ENCODE measurements at regions of chr5 and their contacts with region 1.

Region 1: DNA sequence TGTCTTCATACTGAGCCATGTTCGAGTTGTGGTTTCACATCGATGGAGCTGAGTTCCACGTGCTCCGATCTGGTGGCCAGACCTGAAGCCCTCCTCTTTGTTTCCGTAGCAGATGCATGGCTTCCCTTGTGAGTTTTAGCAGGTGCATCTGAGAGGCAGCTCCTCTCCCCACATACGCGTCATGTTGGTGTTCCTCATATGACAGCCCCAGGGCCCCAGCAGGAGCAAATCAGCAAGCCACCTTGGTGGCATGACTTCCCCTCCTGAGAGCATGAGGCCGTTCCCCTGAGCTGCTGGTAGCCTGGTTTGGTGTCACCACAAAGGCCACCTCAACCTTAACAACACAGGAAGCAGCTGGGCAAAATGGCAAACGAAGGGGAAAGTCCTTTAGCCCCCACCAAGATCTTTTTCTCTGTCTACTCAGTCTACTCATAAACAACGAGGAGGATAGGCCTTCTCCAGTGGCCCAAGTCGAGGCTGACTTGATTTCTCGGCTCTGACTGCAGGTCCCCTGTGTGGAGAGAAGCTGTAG is 5.9 kb downstream of the CYFIP2 start:
- DNase-seq: peak; percentile 94
- H3K4me3 Mint-ChIP-seq: peak overlapping the region; percentile 69
- H3K27ac Mint-ChIP-seq: peak overlapping the region; percentile 97
- H3K4me1 Mint-ChIP-seq: peaks cover 86% of the 10 kb centered on the region
- H3K27me3 Mint-ChIP-seq: no peaks in the 10 kb centered on the region

Region 2: GRCh38 chr5:157088342-157088990 is 183.3 kb before region 1 on chr5:
- CTCF ChIA-PET with region 1: no interaction called
- POLR2A ChIA-PET with region 1: no interaction called
- intact Hi-C with region 1: no loop called
- DNase-seq: no peak
- H3K4me3 Mint-ChIP-seq: no peak overlapping the region
- H3K27ac Mint-ChIP-seq: no peak overlapping the region
- H3K4me1 Mint-ChIP-seq: no peaks in the 10 kb centered on the region
- H3K27me3 Mint-ChIP-seq: no peaks in the 10 kb centered on the region

Region 3: DNA sequence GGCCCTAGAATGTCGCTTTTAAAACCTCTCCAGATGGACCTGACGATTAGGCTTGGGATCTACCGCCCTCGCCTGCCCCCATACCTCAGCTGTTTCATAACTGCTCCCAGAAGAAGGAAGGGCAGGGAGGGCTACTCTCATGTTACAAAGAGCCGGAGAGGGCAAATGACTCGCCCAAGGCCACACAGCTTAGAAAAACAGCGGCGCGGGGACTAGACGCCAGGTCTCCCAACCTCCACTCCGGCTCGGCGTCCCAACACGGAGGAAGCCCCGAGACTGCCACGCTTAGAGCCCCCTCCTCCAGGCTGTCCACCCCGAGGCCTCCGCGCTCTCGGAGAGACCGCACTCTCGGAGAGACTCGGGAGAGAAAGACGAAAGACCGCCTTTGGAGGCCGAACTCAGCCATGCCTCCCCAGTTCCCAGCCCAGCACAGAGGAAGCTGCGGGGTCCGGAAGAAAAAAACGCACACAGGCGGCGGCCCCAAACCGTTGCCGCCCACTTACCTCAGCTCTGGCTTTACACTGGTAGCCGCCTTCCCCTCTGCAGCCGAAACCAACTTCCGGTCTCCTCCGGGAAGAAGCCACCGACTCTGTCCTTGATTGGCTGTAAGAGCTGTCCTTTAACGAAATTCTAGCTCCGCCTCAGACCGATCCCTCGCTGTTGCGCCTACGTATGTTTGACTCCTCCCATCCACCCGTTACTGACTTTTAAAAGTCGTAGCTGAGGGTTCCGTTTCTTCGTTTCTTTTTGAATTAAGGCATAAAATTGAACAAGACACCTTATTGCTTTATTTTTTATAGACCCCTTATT is 129.3 kb before region 1 on chr5 and contains the start of gene MED7:
- CTCF ChIA-PET with region 1: interaction called, 10 read pairs
- POLR2A ChIA-PET with region 1: interaction called, 13 read pairs
- intact Hi-C with region 1: loop called (anchors 1 kb)
- DNase-seq: peak; percentile 96
- H3K4me3 Mint-ChIP-seq: peak within 1 kb of the TSS; percentile 96
- H3K27ac Mint-ChIP-seq: peak within 1 kb of the TSS; percentile 99
- H3K4me1 Mint-ChIP-seq: peaks cover 49% of the 10 kb centered on the region
- H3K27me3 Mint-ChIP-seq: no peaks in the 10 kb centered on the region
- total RNA-seq, gene MED7: 17.2 to 19.2 TPM

Region 4: DNA sequence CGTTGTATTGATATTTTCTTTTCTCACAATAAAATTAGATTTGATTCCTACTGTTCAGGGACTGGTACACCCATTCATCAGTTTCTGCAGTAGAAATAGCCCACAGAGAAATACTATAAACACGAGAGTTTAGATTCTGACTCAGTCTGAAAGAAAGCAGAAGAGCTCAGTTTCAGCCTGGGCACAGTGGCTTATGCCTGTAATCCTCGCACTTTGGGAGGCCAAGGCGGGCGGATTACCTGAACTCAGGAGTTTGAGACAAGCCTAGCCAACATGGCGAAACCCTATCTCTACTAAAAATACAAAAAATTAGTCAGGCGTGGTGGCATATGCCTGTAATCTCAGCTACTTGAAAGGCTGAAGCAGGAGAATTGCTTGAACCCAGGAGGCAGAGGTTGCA is 82.6 kb before region 1 on chr5:
- CTCF ChIA-PET with region 1: interaction called, 5 read pairs
- POLR2A ChIA-PET with region 1: interaction called, 12 read pairs
- intact Hi-C with region 1: no loop called
- DNase-seq: peak; percentile 76
- H3K4me3 Mint-ChIP-seq: peak overlapping the region; percentile 99
- H3K27ac Mint-ChIP-seq: peak overlapping the region; percentile 100
- H3K4me1 Mint-ChIP-seq: peaks cover 75% of the 10 kb centered on the region
- H3K27me3 Mint-ChIP-seq: no peaks in the 10 kb centered on the region

Region 5: DNA sequence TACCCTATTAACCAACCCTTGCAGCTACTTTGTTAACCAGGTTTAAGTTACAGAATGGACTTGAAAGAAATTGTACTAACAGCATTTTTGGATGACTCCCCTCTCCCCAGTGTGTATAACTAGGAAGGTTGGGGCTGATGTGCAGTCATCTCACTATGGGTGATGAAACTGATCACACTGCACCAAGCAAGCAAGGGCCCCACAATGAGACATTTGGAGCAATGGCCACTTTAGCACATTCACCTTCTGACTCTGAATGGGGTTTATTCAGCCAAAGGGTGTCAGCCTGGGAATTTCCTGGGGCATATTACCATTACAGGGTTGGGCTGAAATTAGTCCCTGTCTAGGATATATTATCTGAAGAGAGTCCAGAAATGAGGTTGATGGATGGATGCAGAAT is 24.5 kb before region 1 on chr5:
- CTCF ChIA-PET with region 1: interaction called, 25 read pairs
- POLR2A ChIA-PET with region 1: interaction called, 22 read pairs
- intact Hi-C with region 1: loop called (anchors 1 kb)
- DNase-seq: peak; percentile 79
- H3K4me3 Mint-ChIP-seq: peak overlapping the region; percentile 6
- H3K27ac Mint-ChIP-seq: peak overlapping the region; percentile 89
- H3K4me1 Mint-ChIP-seq: peaks cover 91% of the 10 kb centered on the region
- H3K27me3 Mint-ChIP-seq: no peaks in the 10 kb centered on the region

Region 6: GRCh38 chr5:157312492-157312891 is 40.7 kb after region 1 on chr5:
- CTCF ChIA-PET with region 1: interaction called, 9 read pairs
- POLR2A ChIA-PET with region 1: interaction called, 7 read pairs
- intact Hi-C with region 1: loop called (anchors 1 kb)
- DNase-seq: peak; percentile 74
- H3K4me3 Mint-ChIP-seq: no peak overlapping the region
- H3K27ac Mint-ChIP-seq: peak overlapping the region; percentile 82
- H3K4me1 Mint-ChIP-seq: peaks cover 31% of the 10 kb centered on the region
- H3K27me3 Mint-ChIP-seq: no peaks in the 10 kb centered on the region

Region 7: DNA sequence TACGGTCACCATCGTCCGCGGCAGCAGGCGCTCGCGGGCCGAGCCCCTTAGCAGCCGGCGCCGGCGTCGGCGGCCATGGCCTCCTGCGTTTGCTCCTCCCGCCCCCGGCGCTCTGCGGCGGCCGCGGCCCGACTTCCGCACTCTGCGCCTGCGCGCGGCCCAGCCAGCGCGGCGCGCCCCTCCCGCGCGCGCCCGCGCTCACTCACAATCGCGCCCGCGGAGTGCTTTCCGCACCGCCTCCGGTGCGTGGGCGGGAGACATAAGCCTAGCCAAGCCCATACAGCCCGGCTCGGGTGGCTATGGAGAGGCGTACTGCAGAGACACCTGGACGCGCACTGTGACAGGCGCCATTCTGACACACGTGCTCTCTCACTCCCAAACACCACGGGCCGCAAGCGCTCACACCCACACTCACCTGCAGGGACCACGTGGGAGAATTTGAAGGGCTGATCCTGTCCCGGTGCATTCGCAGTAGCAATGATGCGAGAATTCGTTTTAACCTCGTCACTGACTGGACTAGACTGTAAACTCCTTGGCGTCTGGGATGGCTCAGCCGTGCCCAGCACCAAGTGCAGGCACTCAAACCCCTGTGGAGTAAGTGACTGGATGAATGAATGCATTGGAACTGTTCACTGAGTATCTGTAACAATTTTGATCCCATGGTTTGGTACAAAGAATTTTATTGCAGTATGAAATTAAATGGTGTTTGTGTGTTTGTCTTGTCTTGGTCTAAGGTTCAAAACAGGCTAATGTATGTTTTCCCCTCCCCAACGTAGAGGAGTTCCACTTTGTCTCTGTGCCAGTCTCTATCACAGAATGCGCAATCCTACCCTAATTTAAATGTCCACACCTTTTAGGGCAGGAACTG is 1937.9 kb after region 1 on chr5 and contains the start of gene RNF145:
- CTCF ChIA-PET with region 1: no interaction called
- POLR2A ChIA-PET with region 1: interaction called, 3 read pairs
- intact Hi-C with region 1: loop called (anchors 5 kb)
- DNase-seq: peak; percentile 94
- H3K4me3 Mint-ChIP-seq: peak within 1 kb of the TSS; percentile 99
- H3K27ac Mint-ChIP-seq: peak within 1 kb of the TSS; percentile 100
- H3K4me1 Mint-ChIP-seq: peaks cover 25% of the 10 kb centered on the region
- H3K27me3 Mint-ChIP-seq: no peaks in the 10 kb centered on the region
- total RNA-seq, gene RNF145: 91.4 to 92.6 TPM